Activated CD4-positive, alpha-beta T cell treated with anti-CD3 and anti-CD28 coated beads, Interleukin-2, amount 10 ng/mL, durations not matched to agents 24 days and 14 days (primary cell): ENCODE measurements at regions of chr15 and their contacts with region 1.

Region 1: GRCh38 chr15:58933281-58934113 is at the start of gene SLTM:
- DNase-seq: peak; percentile 96
- H3K4me3 Mint-ChIP-seq: peak within 1 kb of the TSS; percentile 98
- H3K27ac Mint-ChIP-seq: peak within 1 kb of the TSS; percentile 100
- H3K4me1 Mint-ChIP-seq: peaks cover 21% of the 10 kb centered on the region
- H3K27me3 Mint-ChIP-seq: peaks cover 1% of the 10 kb centered on the region
- total RNA-seq, gene SLTM: 126 and 127 TPM in 2 replicates

Region 2: GRCh38 chr15:58357521-58358476 is 575.7 kb before region 1 on chr15:
- intact Hi-C with region 1: loop called (anchors 1 kb)
- DNase-seq: peak; percentile 83
- H3K4me3 Mint-ChIP-seq: peak overlapping the region; percentile 16
- H3K27ac Mint-ChIP-seq: peak overlapping the region; percentile 87
- H3K4me1 Mint-ChIP-seq: peaks cover 45% of the 10 kb centered on the region
- H3K27me3 Mint-ChIP-seq: no peaks in the 10 kb centered on the region

Region 3: DNA sequence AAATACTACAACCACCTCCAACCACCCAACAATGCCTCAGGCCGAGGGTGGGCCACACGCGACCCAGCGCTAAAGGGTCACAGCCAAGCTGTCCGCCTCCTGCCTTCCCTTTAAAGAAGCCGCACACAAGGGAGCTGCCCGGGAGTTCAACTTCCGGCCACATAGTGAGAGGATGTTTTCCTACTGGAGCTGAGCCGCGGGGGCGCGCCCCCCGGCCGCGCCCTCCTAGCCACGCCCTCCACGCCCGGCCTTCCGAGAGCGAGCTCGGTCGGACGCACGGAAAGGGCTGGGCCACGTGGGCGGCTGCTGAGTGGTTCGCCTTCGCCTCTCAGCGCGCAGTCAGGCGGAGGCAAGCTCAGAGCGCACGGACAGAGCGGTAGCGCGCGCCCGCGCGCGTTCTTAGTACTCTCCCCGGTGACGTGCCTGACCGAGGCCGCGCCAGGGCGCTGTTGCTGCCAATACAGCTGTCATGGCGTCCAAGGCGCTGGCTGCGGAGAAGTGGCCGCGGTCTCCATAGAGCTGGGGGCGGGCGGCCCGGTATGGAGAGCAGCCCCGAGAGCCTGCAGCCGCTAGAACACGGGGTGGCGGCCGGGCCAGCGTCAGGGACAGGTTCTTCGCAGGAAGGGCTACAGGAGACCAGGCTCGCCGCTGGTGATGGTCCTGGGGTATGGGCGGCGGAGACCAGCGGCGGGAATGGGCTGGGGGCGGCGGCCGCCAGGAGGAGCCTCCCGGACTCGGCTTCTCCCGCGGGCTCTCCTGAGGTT is 162.5 kb before region 1 on chr15 and contains the start of gene MINDY2:
- intact Hi-C with region 1: loop called (anchors 2 kb)
- DNase-seq: peak; percentile 98
- H3K4me3 Mint-ChIP-seq: no peak within 1 kb of the TSS
- H3K27ac Mint-ChIP-seq: peak within 1 kb of the TSS; percentile 93
- H3K4me1 Mint-ChIP-seq: peaks cover 16% of the 10 kb centered on the region
- H3K27me3 Mint-ChIP-seq: peaks cover 2% of the 10 kb centered on the region
- total RNA-seq, gene MINDY2: 10.1 and 10.9 TPM in 2 replicates

Region 4: DNA sequence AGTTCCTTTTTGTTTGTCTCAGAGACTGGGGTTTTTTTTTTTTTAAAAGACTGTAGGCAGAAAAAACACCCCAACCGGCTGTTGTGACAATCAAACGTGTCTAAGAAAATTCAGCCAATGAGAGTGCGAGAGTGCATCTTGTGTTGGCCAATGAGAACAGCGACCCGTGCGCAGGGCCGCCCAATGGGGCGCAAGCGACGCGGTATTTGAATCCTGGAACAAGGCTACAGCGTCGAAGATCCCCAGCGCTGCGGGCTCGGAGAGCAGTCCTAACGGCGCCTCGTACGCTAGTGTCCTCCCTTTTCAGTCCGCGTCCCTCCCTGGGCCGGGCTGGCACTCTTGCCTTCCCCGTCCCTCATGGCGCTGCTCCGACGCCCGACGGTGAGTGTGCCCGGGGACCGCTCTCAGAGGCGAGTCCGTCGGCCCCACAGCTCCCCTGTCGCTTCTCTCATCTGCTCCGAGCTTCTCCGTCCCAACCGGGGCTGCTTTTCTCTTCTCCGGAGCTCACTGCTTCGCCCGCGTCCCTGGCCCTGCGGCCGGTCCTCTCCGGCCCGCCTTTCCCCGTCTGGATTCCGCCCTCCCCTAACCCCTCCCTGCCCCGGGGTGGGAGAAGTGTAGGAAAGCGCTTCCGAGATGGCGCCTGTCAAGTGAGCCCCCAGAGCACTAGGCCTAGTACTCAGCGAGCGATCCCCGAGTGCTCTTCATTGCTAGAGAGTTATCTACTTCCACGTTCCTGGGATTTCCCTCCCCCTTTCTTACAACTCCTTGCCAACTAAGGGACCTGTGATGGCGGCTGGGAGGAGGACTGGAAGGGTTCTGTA is 171.6 kb after region 1 on chr15 and contains the start of gene CCNB2:
- intact Hi-C with region 1: loop called (anchors 2 kb)
- DNase-seq: peak; percentile 96
- H3K4me3 Mint-ChIP-seq: peak within 1 kb of the TSS; percentile 85
- H3K27ac Mint-ChIP-seq: peak within 1 kb of the TSS; percentile 98
- H3K4me1 Mint-ChIP-seq: peaks cover 28% of the 10 kb centered on the region
- H3K27me3 Mint-ChIP-seq: no peaks in the 10 kb centered on the region
- total RNA-seq, gene CCNB2: 38.6 and 39.2 TPM in 2 replicates